ENCODE measurements at regions of chr3 and their contacts with region 1.

Region 1: DNA sequence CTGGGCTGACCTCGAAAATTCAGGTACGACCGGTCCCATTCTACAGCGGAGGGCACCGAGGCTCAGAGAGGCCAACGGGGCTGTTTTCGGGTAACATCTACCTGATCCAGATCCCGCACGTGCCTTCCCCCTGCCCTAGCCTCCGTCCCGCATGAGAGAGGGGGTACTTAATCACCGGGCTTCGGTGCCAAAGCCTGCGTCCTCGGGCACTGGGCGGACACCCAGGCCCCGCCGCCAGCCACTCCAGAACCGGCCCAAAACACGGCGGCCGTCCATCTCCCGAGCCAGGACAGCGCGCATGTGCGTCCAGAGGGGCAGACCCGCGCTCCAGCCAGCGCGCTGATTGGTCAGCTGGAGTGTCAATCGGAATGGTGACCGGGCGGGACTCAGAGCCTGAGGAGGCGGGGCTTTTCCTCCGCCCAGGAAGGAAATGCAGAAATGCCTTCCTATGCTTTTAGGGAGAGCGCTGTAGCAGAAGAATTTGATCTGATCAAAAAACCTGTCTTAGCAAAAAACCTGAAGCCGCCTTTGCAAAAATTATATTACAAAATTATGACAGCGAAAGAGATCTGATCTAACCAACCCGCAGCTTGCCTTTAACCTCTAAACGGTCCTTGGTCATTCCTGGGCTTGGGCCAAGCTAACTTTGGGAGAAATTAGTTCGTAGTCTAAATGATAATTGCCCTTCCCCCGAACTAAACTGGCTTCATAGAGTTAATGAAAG is at the start of gene RPUSD3:
- DNase-seq: peak; percentile 95 to 99
- ATAC-seq: peak; percentile 95 to 98
- H3K4me3 ChIP-seq: peak within 1 kb of the TSS; percentile 79
- H3K27ac ChIP-seq: peak within 1 kb of the TSS; percentile 85 to 89
- H3K4me1 ChIP-seq: peaks cover 11% of the 10 kb centered on the region; the same call in 2 of the 3 replicates
- CTCF ChIP-seq: no peak
- EP300 ChIP-seq: no peak
- POLR2A ChIP-seq: peak; percentile 82
- RAD21 ChIP-seq: 0 out of 5 replicates have a peak, but pooled peaks of 1 of the 2 experiments have one; percentile 14
- polyA plus RNA-seq, gene RPUSD3: 38.9 and 47.1 TPM in 2 replicates

Region 2: DNA sequence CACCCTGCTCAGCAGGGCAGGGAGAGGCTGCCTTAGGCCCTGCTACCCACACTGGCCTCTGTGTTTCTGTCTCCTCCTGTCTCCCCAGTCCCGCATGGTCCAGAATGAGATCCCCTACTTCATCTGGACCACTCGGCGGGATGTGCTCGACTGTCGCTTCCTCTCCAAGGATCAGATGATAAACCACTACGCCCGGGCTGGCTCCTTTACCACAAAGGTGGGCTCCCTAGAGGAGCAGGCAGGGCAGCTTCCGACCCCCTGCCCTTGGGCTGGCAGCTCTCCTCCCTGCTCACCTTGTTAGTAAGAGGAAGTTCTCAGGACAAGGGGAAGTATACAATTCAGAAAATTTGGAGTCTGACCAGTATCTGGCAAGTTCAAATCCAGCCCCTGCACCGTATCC is 27.9 kb before region 1 on chr3:
- CTCF ChIA-PET with region 1: no interaction called
- POLR2A ChIA-PET with region 1: no interaction called
- DNase-seq: no peak
- ATAC-seq: no peak
- H3K4me3 ChIP-seq: no peak overlapping the region
- H3K27ac ChIP-seq: no peak overlapping the region
- H3K4me1 ChIP-seq: peaks cover under 1% of the 10 kb centered on the region; the same call in 2 of the 3 replicates
- CTCF ChIP-seq: no peak
- EP300 ChIP-seq: no peak
- POLR2A ChIP-seq: no peak
- RAD21 ChIP-seq: no peak

Region 3: GRCh38 chr3:9884555-9885165 is 40.8 kb after region 1 on chr3:
- CTCF ChIA-PET with region 1: interaction called, 10 read pairs
- POLR2A ChIA-PET with region 1: interaction called, 3 read pairs
- DNase-seq: peak; percentile 93 to 96
- ATAC-seq: peak; percentile 98 to 99
- H3K4me3 ChIP-seq: no peak overlapping the region
- H3K27ac ChIP-seq: peak overlapping the region; percentile 88 to 89
- H3K4me1 ChIP-seq: peaks cover 31% of the 10 kb centered on the region
- CTCF ChIP-seq: no peak
- EP300 ChIP-seq: no peak
- POLR2A ChIP-seq: no peak
- RAD21 ChIP-seq: peak in 1 of 2 experiments; percentile 22; a peak in 1 of 5 replicates